ENCODE measurements at regions of chr7 and their contacts with region 1.

Region 1: DNA sequence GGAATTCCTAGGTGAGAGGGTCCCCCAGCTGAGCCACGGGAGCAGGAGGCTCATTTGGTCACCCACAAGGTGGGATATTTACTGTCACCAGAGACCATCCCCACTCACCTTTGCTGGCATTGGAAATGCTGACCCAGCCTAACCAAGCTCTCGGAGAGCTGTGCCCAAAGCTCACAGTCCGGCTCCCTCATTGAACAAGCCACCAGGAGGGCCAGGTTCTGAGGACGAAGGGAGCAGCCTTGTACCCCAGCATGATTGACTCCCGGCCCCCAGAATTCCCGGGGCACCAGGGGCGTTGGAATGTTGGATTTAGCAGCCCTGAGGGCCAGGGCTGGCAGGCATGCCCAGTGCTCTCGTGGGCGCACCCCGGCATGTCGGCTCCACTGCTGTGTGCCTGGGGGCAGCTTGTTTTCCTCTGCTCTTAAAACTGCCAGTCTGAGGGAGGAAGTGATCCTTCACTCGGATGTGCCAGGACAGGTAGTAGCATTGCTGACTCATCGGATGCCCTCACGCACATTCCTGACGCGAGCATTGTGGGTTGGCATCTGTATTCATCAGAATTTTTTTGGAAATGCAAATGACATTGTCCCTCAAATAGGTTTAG is 23.3 kb downstream of the CLIP2 start:
- DNase-seq: peak; percentile 89 to 95
- H3K4me3 ChIP-seq: peak overlapping the region; percentile 50; the same call in 1 of the 2 replicates
- H3K27ac ChIP-seq: peak overlapping the region; percentile 92
- H3K4me1 ChIP-seq: peaks cover 19% of the 10 kb centered on the region
- H3K27me3 ChIP-seq: no peaks in the 10 kb centered on the region
- CTCF ChIP-seq: no peak

Region 2: GRCh38 chr7:74240482-74240881 is 72.0 kb before region 1 on chr7:
- CTCF ChIA-PET with region 1: no interaction called
- POLR2A ChIA-PET with region 1: interaction called, 19 read pairs
- intact Hi-C with region 1: no loop called
- DNase-seq: no peak
- H3K4me3 ChIP-seq: no peak overlapping the region
- H3K27ac ChIP-seq: no peak overlapping the region
- H3K4me1 ChIP-seq: no peaks in the 10 kb centered on the region
- H3K27me3 ChIP-seq: no peaks in the 10 kb centered on the region
- CTCF ChIP-seq: no peak

Region 3: GRCh38 chr7:74254129-74254857 is 58.2 kb before region 1 on chr7 and contains the start of gene RFC2:
- CTCF ChIA-PET with region 1: interaction called, 3 read pairs
- POLR2A ChIA-PET with region 1: no interaction called
- intact Hi-C with region 1: loop called (anchors 2 kb)
- DNase-seq: peak; percentile 88 to 99
- H3K4me3 ChIP-seq: peak within 1 kb of the TSS; percentile 92
- H3K27ac ChIP-seq: peak within 1 kb of the TSS; percentile 67
- H3K4me1 ChIP-seq: peaks cover 17% of the 10 kb centered on the region
- H3K27me3 ChIP-seq: no peaks in the 10 kb centered on the region
- CTCF ChIP-seq: no peak
- total RNA-seq, gene RFC2: 65.5 and 75.7 TPM in 2 replicates

Region 4: GRCh38 chr7:74294191-74294998 is 18.1 kb before region 1 on chr7:
- CTCF ChIA-PET with region 1: interaction called, 4 read pairs
- POLR2A ChIA-PET with region 1: interaction called, 15 read pairs
- intact Hi-C with region 1: no loop called
- DNase-seq: no peak
- H3K4me3 ChIP-seq: no peak overlapping the region
- H3K27ac ChIP-seq: no peak overlapping the region
- H3K4me1 ChIP-seq: peaks cover 8% of the 10 kb centered on the region
- H3K27me3 ChIP-seq: no peaks in the 10 kb centered on the region
- CTCF ChIP-seq: no peak

Region 5: DNA sequence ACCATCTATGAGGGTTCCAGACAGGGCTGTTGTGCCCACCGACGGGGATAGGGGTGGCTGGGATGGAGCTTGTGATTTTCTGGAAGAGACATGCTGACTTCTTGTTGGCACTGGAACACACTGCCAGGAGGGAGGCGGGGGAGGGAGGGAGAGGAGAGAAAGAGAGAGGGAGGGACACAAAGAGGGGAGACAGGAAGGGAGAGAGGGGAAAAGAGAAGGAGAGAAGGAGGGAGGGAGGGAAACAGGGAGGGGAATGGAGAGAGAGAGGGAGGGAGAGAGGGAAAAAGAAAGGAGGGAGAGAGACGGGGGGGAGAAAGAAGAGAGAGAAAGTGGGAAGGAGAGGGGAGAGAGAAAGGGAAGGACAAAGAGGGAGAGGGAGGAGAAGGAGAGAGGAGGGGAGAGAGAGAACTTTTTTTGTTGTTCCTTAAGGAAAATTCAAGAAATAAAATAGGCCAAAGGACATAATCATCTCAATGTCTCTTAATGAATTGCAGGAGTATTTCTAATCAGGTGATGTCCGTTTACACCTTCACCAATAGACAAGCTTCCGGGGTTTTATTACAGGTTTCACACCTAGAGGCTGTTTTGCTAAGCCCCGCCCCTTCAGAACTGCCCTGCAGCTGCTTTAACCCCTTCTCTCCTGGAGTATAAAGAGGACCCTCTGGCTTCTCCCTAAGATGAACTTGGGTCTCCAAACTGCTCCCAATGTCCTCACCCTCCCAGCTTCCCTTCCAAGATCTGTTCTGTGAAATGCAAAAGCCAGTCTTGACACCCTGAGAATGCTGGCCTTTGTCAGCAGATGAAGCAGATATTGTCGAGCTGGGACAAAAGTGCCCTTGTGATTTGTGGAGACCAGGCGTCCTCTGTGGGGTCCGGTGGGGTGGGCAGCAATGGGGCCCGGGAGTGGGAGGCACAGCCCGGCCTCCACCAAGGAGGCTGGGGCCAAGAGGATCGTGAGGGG is 59.1 kb after region 1 on chr7:
- CTCF ChIA-PET with region 1: no interaction called
- POLR2A ChIA-PET with region 1: no interaction called
- intact Hi-C with region 1: loop called (anchors 10 kb)
- DNase-seq: peak; percentile 49 to 51
- H3K4me3 ChIP-seq: no peak overlapping the region
- H3K27ac ChIP-seq: peak overlapping the region; percentile 44
- H3K4me1 ChIP-seq: peaks cover 17% of the 10 kb centered on the region
- H3K27me3 ChIP-seq: no peaks in the 10 kb centered on the region
- CTCF ChIP-seq: no peak